CD4-positive, alpha-beta memory T cell (primary cell): ENCODE measurements at regions of chr16 and their contacts with region 1.

Region 1: DNA sequence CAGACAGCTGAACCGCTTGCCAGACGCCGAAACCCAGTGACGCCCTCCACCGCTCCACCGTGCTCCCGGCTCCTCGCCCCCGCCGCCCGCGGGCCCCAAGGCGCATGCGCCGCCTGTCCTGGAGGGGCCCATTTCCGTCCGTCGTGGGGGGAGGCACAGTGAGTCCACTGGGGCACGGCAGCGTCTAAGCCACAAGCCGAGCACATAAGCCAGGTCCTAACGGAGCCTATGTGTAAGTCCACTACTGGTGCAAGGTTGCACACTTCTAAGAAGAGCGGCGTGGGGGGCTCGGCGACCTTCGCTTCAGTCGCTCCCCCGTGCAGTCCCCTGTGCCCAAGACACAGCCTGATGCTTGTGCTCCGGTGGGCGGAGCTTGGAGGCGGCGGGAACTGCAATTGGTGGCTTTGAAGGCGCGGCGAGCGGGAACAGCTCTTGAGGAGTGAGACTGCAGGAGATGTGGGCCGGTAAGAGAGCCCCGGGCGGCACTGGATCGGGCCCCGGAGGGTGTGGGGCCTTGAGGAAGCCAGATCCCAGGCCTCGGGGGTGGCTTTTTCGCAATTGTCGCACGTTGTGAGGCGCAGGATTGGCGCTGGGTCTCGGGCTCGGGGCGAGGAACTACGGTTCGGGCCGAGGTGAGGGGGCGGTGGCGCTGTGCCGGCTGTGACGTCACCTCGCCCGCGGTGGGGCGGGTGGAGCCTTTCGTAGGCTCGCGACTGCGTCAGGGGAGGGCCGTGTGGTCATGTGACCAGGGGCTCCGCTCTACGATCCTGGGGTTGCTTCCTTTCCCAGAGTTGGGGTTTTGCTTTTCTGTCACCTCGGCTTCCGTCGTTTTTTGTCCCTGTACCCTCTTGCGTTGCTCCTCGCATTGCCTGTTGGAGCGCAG is at the starts of genes CENPN and CMC2:
- DNase-seq: peak; percentile 99 to 100 (median 99)
- H3K4me3 ChIP-seq: peak within 1 kb of the TSS; percentile 85 to 86
- H3K4me3 Mint-ChIP-seq: peak within 1 kb of the TSS; percentile 93 to 99 (median 94)
- H3K27ac ChIP-seq: peak within 1 kb of the TSS; percentile 95
- H3K27ac Mint-ChIP-seq: peak within 1 kb of the TSS; percentile 97 to 100 (median 100)
- H3K4me1 ChIP-seq: peaks cover 47% of the 10 kb centered on the region
- H3K4me1 Mint-ChIP-seq: peaks cover 28 to 51% (median 40%) of the 10 kb centered on the region in 4 donors
- H3K27me3 ChIP-seq: no peaks in the 10 kb centered on the region
- H3K27me3 Mint-ChIP-seq: no peaks in the 10 kb centered on the region
- total RNA-seq, gene CENPN: 3.4 to 4.0 TPM
- total RNA-seq, gene CMC2: 39.7 to 39.9 TPM

Region 2: DNA sequence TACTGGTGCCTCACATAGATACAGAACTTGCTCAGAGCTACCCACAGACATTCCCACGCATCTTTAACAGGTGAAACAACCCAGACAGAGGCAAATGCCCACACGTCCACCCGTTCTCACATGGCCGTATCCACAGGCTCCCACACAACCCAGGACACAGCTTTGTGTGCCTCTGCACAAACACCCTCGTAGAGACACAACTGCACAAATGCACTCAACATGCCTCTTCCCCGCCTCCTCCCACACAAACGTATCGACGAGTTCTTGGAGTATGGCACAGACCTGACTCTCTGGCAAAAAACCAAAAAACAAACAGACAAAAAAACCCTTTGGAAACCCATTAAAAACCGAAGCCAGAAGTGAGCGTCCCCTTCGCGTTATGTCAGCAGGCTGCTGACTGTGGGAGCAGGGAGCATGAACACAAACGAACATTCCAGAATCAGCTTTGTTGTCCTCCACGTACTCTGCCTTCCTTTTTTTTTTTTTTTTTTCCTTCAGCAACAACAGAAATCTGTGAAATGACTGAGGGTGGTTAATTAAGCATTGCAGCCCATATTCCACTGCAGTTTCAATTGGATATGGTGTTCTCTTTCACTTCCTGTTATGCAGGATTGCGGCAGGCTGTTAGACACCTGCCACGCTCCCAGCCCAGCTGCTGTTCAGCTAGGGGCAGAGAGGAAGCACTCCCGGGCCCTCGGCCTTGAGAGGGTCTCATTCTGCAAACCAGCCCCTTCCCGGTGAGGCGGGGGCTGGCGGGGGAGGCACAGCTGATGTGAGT is 1720.2 kb before region 1 on chr16:
- CTCF ChIA-PET with region 1: no interaction called
- POLR2A ChIA-PET with region 1: no interaction called
- intact Hi-C with region 1: loop called (anchors 10 kb)
- DNase-seq: peak in 4 of 5 donors; percentile 36 to 48 (median 40)
- H3K4me3 ChIP-seq: peak overlapping the region; percentile 6 to 59
- H3K4me3 Mint-ChIP-seq: peak overlapping the region; percentile 73 to 93 (median 86)
- H3K27ac ChIP-seq: peak overlapping the region; percentile 23
- H3K27ac Mint-ChIP-seq: peak overlapping the region; percentile 79 to 92 (median 88)
- H3K4me1 ChIP-seq: peaks cover 62% of the 10 kb centered on the region
- H3K4me1 Mint-ChIP-seq: peaks cover 44 to 68% (median 59%) of the 10 kb centered on the region in 4 donors
- H3K27me3 ChIP-seq: no peaks in the 10 kb centered on the region
- H3K27me3 Mint-ChIP-seq: no peaks in the 10 kb centered on the region

Region 3: GRCh38 chr16:80804056-80804450 is 203.0 kb before region 1 on chr16:
- CTCF ChIA-PET with region 1: no interaction called
- POLR2A ChIA-PET with region 1: no interaction called
- intact Hi-C with region 1: loop called (anchors 10 kb)
- DNase-seq: peak; percentile 57 to 70 (median 65)
- H3K4me3 ChIP-seq: peak overlapping the region in 1 of 2 donors; percentile 51
- H3K4me3 Mint-ChIP-seq: peak overlapping the region; percentile 80 to 98 (median 96)
- H3K27ac ChIP-seq: no peak overlapping the region
- H3K27ac Mint-ChIP-seq: peak overlapping the region; percentile 74 to 96 (median 86)
- H3K4me1 ChIP-seq: peaks cover 31% of the 10 kb centered on the region
- H3K4me1 Mint-ChIP-seq: peaks cover 12 to 38% (median 27%) of the 10 kb centered on the region in 4 donors
- H3K27me3 ChIP-seq: no peaks in the 10 kb centered on the region
- H3K27me3 Mint-ChIP-seq: no peaks in the 10 kb centered on the region

Region 4: DNA sequence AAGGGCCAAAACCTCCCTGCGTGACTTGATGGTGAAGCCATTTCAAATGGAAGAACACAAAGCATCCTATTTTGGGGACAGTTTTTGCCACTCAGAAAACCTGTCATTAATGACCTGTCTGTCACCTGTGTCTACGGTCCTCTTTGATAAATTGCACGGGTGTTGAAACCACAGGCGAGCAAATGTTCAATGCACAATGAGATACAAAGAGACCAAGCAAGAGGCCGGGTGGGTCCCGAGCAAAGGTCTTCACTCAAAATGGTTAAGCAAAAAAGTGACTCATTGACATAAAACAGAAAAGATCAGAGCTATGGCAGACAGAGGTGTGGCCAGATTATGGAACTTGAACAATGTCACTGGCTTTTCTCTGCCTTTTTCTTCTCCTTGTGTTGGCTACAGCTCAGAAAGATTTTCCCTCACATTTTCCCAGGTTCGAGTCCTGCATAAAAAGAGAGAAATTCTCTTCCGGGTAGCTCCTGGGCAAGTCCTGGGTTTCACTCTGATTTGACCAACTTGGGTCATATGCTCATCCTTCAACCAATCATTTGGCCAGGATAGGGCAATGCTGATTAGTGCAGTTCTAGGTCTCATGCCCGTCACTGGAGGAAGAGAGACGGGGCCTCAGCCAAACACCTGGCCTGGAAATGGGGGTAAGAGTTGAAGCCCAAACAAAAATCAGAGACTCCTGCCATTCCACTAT is 92.5 kb before region 1 on chr16:
- CTCF ChIA-PET with region 1: no interaction called
- POLR2A ChIA-PET with region 1: no interaction called
- intact Hi-C with region 1: no loop called
- DNase-seq: no peak
- H3K4me3 ChIP-seq: no peak overlapping the region
- H3K4me3 Mint-ChIP-seq: no peak overlapping the region
- H3K27ac ChIP-seq: no peak overlapping the region
- H3K27ac Mint-ChIP-seq: no peak overlapping the region
- H3K4me1 ChIP-seq: no peaks in the 10 kb centered on the region
- H3K4me1 Mint-ChIP-seq: no peaks in the 10 kb centered on the region
- H3K27me3 ChIP-seq: no peaks in the 10 kb centered on the region
- H3K27me3 Mint-ChIP-seq: peaks cover 10 to 15% of the 10 kb centered on the region in 2 donors

Region 5: DNA sequence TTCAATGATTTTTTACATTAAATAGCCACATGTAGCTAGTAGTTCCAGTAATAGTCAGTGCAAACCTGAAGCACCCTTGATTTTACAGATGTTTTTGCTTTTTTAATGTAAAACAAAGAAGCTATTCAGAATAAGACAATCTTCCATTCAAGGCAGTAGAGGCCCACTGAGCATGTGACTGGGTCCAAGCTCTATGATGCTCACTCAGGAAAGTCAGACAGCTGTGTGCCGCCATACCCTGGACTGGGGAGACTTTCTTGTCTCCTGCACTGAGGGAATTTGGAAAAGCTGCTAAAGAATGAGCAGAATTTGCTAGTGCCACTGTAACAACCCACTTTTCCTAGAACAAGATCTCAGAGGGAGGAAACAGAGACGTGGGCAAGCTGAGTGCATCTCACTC is 11.4 kb after region 1 on chr16:
- CTCF ChIA-PET with region 1: interaction called, 26 read pairs
- POLR2A ChIA-PET with region 1: interaction called, 5 read pairs
- intact Hi-C with region 1: no loop called
- DNase-seq: no peak
- H3K4me3 ChIP-seq: no peak overlapping the region
- H3K4me3 Mint-ChIP-seq: peak overlapping the region in 1 of 8 donors; percentile 10
- H3K27ac ChIP-seq: no peak overlapping the region
- H3K27ac Mint-ChIP-seq: no peak overlapping the region
- H3K4me1 ChIP-seq: no peaks in the 10 kb centered on the region
- H3K4me1 Mint-ChIP-seq: peaks cover 2 to 4% (median 4%) of the 10 kb centered on the region in 4 donors
- H3K27me3 ChIP-seq: no peaks in the 10 kb centered on the region
- H3K27me3 Mint-ChIP-seq: no peaks in the 10 kb centered on the region

Region 6: DNA sequence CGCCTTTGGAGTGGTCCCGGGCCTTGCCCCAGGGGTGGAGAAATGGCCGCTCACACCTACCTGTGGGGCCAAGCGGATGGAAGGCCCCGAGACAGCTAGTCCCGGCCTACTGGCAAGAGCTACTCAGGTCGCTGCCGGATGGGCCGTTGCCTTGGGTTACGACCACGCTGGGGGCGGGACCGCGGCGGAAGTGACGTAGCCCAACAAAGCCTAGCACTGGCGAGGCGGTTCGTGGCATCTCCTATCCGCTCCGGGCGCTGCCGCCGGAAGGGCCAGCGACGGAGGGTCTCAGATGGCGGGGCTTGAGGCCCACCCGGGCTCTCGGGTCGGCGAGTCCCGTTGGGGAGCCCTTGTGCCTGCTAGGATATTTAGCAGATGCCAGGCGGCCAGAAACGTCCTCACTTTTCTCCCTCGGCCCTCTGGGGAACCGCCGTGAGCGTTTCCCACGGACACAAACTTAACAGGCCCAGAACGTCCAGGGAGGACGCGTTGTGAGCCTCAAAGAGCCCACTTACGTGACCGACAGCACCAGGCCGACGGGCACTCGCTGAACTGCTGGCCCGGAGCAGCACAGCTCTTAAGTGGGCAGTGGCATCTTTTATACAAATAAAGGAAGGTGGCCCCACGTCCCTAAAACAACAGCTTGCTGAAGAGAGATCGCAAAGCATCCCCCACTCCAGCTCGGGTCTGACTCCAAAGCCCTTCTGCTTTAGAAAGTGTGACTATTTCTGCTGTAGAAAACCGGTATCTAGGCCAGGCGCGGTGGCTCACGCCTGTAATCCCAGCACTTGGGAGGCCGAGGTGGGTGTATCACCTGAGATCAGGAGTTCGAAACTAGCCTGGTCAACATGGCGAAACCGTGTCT is 70.3 kb after region 1 on chr16 and contains the start of gene C16orf46:
- CTCF ChIA-PET with region 1: interaction called, 13 read pairs
- POLR2A ChIA-PET with region 1: interaction called, 19 read pairs
- intact Hi-C with region 1: loop called (anchors 1 kb)
- DNase-seq: peak; percentile 96 to 99 (median 96)
- H3K4me3 ChIP-seq: peak within 1 kb of the TSS; percentile 59 to 75
- H3K4me3 Mint-ChIP-seq: peak within 1 kb of the TSS in 1 of 8 donors; percentile 20
- H3K27ac ChIP-seq: peak within 1 kb of the TSS; percentile 95
- H3K27ac Mint-ChIP-seq: peak within 1 kb of the TSS in 2 of 7 donors; percentile 25 to 66
- H3K4me1 ChIP-seq: peaks cover 13% of the 10 kb centered on the region
- H3K4me1 Mint-ChIP-seq: peaks cover 0 to 4% (median 1%) of the 10 kb centered on the region in 4 donors
- H3K27me3 ChIP-seq: no peaks in the 10 kb centered on the region
- H3K27me3 Mint-ChIP-seq: no peaks in the 10 kb centered on the region
- total RNA-seq, gene C16orf46: 0.29 TPM in 1 of 2 experiments, not detected in the other

Region 7: DNA sequence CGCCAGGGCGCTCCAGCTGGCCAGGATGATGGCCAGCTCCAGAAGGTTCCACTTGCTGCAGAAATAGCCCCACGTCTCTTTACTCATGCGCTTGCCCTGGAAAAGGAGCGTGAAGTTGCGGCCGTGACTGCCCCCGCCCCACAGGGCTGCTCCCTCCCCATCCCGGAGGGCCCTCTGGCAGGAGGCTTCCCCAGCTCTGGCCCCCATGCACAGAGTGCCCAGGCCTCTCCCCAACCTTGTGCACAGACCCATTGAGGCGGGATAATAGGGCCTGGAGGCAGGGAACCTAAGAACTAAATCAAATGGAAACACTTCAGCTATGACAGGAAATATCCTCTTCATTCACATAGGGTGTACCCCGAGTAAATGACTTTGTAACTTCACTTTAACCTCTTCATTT is 110.4 kb after region 1 on chr16:
- CTCF ChIA-PET with region 1: no interaction called
- POLR2A ChIA-PET with region 1: no interaction called
- intact Hi-C with region 1: no loop called
- DNase-seq: no peak
- H3K4me3 ChIP-seq: no peak overlapping the region
- H3K4me3 Mint-ChIP-seq: no peak overlapping the region
- H3K27ac ChIP-seq: no peak overlapping the region
- H3K27ac Mint-ChIP-seq: no peak overlapping the region
- H3K4me1 ChIP-seq: no peaks in the 10 kb centered on the region
- H3K4me1 Mint-ChIP-seq: no peaks in the 10 kb centered on the region
- H3K27me3 ChIP-seq: no peaks in the 10 kb centered on the region
- H3K27me3 Mint-ChIP-seq: peaks cover 4 to 10% of the 10 kb centered on the region in 2 donors

Region 8: GRCh38 chr16:81314603-81315270 is 307.7 kb after region 1 on chr16 and contains the start of gene GAN:
- CTCF ChIA-PET with region 1: interaction called, 4 read pairs
- POLR2A ChIA-PET with region 1: interaction called, 6 read pairs
- intact Hi-C with region 1: loop called (anchors 1 kb)
- DNase-seq: peak; percentile 93 to 95 (median 94)
- H3K4me3 ChIP-seq: peak within 1 kb of the TSS; percentile 86 to 93
- H3K4me3 Mint-ChIP-seq: peak within 1 kb of the TSS; percentile 92 to 99 (median 97)
- H3K27ac ChIP-seq: peak within 1 kb of the TSS; percentile 33
- H3K27ac Mint-ChIP-seq: peak within 1 kb of the TSS; percentile 89 to 98 (median 94)
- H3K4me1 ChIP-seq: peaks cover 25% of the 10 kb centered on the region
- H3K4me1 Mint-ChIP-seq: peaks cover 33 to 53% (median 44%) of the 10 kb centered on the region in 4 donors
- H3K27me3 ChIP-seq: no peaks in the 10 kb centered on the region
- H3K27me3 Mint-ChIP-seq: no peaks in the 10 kb centered on the region
- total RNA-seq, gene GAN: 9.5 to 10.8 TPM